RWPE1 (cell line): ENCODE measurements at regions of chr10 and their contacts with region 1.

Region 1: GRCh38 chr10:92839191-92840085 is 8.9 kb upstream of the EXOC6 start:
- DNase-seq: peak; percentile 28
- H3K27ac ChIP-seq: no peak overlapping the region
- CTCF ChIP-seq: no peak

Region 2: GRCh38 chr10:92662848-92663247 is 176.6 kb before region 1 on chr10:
- CTCF ChIA-PET with region 1: interaction called, 12 read pairs
- POLR2A ChIA-PET with region 1: no interaction called
- DNase-seq: no peak
- H3K27ac ChIP-seq: no peak overlapping the region
- CTCF ChIP-seq: no peak